Heart right ventricle (tissue), 16 donors: ENCODE measurements at regions of chr1 and their contacts with region 1.

Region 1: DNA sequence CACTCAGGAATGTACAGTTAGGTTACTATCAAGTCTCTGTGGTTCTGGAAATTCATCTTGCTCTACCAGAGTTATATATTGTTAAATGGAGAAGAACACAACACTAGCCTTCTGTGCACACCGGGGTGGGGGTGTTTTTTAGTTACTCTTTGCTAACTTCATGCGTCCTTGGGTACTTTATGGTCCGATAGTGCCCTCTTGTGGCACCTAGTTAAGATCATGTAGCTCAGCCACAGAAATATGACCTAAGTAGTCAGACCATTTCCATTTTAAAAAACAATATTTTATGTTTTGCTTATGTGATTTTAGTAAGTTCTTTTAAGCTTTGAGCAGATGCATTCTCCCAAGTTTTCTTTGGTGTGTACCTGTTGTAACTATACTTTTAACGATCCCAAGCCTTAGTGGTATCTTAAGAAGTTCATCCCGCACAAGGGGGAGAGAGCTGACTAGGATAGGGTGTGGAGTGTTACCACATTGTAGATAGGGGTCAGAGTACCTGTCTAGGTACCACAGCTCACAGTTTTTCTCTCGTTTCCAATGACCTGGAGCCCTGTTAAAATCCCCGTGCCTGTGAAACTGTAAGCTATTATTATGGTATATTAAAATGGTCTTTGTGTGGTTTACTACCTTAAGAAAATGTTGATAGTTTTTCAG is 20.6 kb upstream of the SH3D21 start:
- DNase-seq: peak in 1 of 2 donors; percentile 83
- ATAC-seq: peak; percentile 63 to 87 (median 84)
- H3K4me3 ChIP-seq: no peak overlapping the region
- H3K27ac ChIP-seq: peak overlapping the region in 8 of 10 donors; percentile 8 to 82 (median 68)
- H3K4me1 ChIP-seq: peaks cover 3 to 85% (median 54%) of the 10 kb centered on the region in 9 donors
- H3K27me3 ChIP-seq: no peaks in the 10 kb centered on the region
- CTCF ChIP-seq: peak; percentile 55 to 89 (median 78)

Region 2: GRCh38 chr1:36149237-36149972 is 136.2 kb before region 1 on chr1 and contains the start of gene TRAPPC3:
- intact Hi-C with region 1: loop called in 9 of 10 experiments (anchors 1 to 10 kb)
- DNase-seq: peak; percentile 100
- ATAC-seq: peak; percentile 92 to 97 (median 94)
- H3K4me3 ChIP-seq: peak within 1 kb of the TSS; percentile 59 to 87 (median 78)
- H3K27ac ChIP-seq: peak within 1 kb of the TSS; percentile 84 to 100 (median 94)
- H3K4me1 ChIP-seq: peaks cover 18 to 63% (median 50%) of the 10 kb centered on the region in 9 donors
- H3K27me3 ChIP-seq: no peaks in the 10 kb centered on the region
- CTCF ChIP-seq: peak; percentile 84 to 100 (median 97)
- total RNA-seq, gene TRAPPC3: 41.6 to 62.6 (median 48.4) TPM

Region 3: DNA sequence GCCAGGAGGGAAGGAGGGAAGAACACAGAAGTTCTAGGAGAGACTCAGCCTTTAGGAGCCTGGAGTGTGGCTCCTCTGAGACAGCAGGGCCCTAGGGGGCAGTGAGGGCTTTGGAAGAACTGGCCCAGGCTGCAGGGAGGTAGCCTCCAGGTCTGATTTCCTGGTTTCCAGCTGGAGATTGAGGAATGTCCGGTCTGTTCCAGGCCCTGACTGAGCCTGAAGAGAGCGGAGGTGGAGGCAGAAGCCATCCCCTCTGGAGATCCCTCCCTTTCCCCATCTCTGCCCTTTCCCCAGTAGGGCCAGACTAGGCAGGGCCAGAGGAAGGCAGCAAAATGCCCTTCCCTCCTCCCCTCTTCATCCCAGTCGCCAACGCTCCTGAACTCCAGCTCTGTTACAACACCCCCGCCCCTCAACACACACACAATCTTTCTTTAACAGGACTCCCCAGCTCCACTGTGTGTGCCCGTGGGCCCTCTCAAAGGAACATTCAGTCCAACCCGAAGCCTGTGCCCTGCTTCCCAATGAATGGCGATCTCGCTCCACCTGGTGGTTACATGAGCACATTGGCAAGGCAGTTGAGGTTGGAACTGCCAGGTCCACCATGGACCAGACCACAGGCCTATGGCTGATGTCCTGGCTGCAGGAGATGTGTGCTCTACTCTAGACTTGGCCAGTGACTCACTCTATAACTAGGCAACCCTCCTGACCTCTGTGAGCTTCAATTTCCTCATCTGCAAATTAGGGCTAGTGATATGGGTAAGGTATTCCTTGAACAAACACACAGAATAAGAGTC is 97.6 kb before region 1 on chr1:
- intact Hi-C with region 1: loop called in 2 of 10 experiments (anchors 10 kb)
- DNase-seq: peak; percentile 76 to 90
- ATAC-seq: peak; percentile 91 to 97 (median 96)
- H3K4me3 ChIP-seq: peak overlapping the region in 2 of 10 donors; percentile 9 to 19
- H3K27ac ChIP-seq: peak overlapping the region; percentile 68 to 93 (median 83)
- H3K4me1 ChIP-seq: peaks cover 0 to 24% (median 10%) of the 10 kb centered on the region in 9 donors
- H3K27me3 ChIP-seq: no peaks in the 10 kb centered on the region
- CTCF ChIP-seq: peak; percentile 67 to 94 (median 86)

Region 4: GRCh38 chr1:36223993-36224536 is 61.5 kb before region 1 on chr1 and contains the start of gene THRAP3:
- intact Hi-C with region 1: loop called in 8 of 10 experiments (anchors 1 to 10 kb)
- DNase-seq: peak; percentile 99
- ATAC-seq: peak; percentile 96 to 98 (median 97)
- H3K4me3 ChIP-seq: peak within 1 kb of the TSS; percentile 63 to 88 (median 79)
- H3K27ac ChIP-seq: peak within 1 kb of the TSS; percentile 93 to 99 (median 96)
- H3K4me1 ChIP-seq: peaks cover 3 to 53% (median 45%) of the 10 kb centered on the region in 9 donors
- H3K27me3 ChIP-seq: no peaks in the 10 kb centered on the region
- CTCF ChIP-seq: no peak
- total RNA-seq, gene THRAP3: 85.3 to 109 (median 100) TPM

Region 5: DNA sequence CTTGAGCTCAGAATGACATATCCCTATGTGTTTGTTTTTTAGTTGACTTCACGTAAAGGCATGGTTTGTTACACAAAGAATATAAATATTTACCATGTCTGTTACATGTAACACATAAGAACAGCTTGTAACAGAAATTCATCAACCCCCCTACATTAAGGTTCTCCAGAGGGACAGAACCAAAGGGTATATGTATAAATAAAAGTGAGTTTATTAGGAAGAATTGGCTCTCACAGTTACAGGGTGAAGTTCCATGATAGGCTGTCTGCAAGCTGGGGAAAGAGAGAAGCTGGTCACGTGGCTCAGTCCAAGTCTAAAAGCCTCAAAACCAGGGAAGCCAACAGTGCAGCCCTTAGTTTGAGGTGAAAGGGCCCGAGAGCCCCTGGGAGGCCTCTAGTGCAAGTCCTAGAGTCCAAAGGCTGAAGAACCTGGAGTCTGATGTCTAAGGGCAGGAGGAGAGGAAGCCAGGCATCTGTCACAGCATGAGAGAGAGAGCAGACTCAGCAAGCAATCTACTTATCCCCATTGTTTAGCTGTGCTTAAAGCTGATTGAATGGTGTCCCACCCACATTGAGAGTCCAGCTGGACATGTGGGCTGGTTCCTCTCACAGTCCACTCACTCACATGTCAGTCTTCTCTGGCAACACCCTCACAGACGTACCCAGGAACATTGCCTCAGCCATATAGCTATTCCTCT is 45.5 kb before region 1 on chr1:
- intact Hi-C with region 1: loop called in 3 of 10 experiments (anchors 5 kb)
- DNase-seq: peak in 1 of 2 donors; percentile 79
- ATAC-seq: peak; percentile 88 to 98 (median 94)
- H3K4me3 ChIP-seq: no peak overlapping the region
- H3K27ac ChIP-seq: peak overlapping the region in 9 of 10 donors; percentile 22 to 68 (median 46)
- H3K4me1 ChIP-seq: peaks cover 31 to 90% (median 66%) of the 10 kb centered on the region in 9 donors
- H3K27me3 ChIP-seq: no peaks in the 10 kb centered on the region
- CTCF ChIP-seq: no peak

Region 6: GRCh38 chr1:36463803-36464604 is 178.4 kb after region 1 on chr1 and contains the start of gene MRPS15:
- intact Hi-C with region 1: no loop called
- DNase-seq: peak; percentile 94 to 97
- ATAC-seq: peak; percentile 95 to 98 (median 96)
- H3K4me3 ChIP-seq: peak within 1 kb of the TSS; percentile 81 to 99 (median 96)
- H3K27ac ChIP-seq: peak within 1 kb of the TSS; percentile 9 to 95 (median 89)
- H3K4me1 ChIP-seq: peaks cover 8 to 25% (median 17%) of the 10 kb centered on the region in 9 donors
- H3K27me3 ChIP-seq: no peaks in the 10 kb centered on the region
- CTCF ChIP-seq: no peak
- total RNA-seq, gene MRPS15: 86.1 to 118 (median 104) TPM

Region 7: GRCh38 chr1:36557041-36558000 is 271.7 kb after region 1 on chr1:
- intact Hi-C with region 1: no loop called
- DNase-seq: no peak
- ATAC-seq: no peak
- H3K4me3 ChIP-seq: no peak overlapping the region
- H3K27ac ChIP-seq: no peak overlapping the region
- H3K4me1 ChIP-seq: no peaks in the 10 kb centered on the region
- H3K27me3 ChIP-seq: peaks cover 4 to 58% (median 42%) of the 10 kb centered on the region in 7 donors
- CTCF ChIP-seq: no peak